T-cell (primary cell): ENCODE measurements at regions of chr10 and their contacts with region 1.

Region 1: DNA sequence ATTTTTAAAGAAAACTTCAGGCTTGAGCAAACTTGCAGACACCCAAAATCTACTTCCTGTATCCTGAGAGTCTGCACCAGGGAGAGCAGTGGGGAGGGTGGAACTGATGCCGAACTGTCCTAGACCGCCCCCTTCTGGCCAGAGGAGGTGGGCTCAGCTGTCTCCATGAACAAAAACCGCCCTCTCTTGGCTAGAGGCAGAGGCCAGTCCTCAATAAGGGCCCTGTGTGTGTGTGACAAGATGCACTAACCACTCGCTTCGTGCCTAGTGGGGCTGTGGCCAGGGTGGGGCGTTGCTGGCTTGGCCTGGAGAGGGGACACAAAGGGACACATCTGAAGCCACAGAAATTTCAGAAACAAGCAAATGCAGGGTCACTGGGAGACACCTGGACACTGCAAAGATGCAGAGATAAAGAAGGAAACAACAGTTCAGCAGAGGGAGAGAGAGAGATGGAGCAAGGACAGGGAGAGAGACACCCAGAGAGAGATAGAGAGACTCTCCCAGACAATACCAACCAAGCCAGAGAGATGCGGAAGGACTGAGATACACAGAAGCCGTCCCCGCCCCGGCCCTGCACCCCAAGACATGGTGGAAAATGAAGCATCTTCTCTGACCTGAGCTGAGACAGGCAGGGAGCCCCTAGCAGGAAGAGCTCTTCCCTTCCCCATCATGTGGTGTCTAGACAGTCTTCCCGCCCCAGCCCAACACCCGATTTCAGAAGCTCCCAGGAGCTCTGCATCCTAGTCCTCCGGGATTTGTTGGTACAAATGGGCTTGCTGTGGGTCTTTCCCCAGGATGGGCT is 22.7 kb upstream of the FXYD4 start:
- DNase-seq: peak; percentile 65 to 94 (median 81)
- ATAC-seq: peak; percentile 99 to 100 (median 100)
- H3K4me3 ChIP-seq: no peak overlapping the region
- H3K4me3 Mint-ChIP-seq: peak overlapping the region in 1 of 3 donors; percentile 45
- H3K27ac ChIP-seq: no peak overlapping the region
- H3K27ac Mint-ChIP-seq: peak overlapping the region; percentile 24 to 65
- H3K4me1 ChIP-seq: peaks cover 2 to 23% of the 10 kb centered on the region in 2 experiments
- H3K4me1 Mint-ChIP-seq: peaks cover 14 to 27% (median 15%) of the 10 kb centered on the region in 3 donors
- H3K27me3 ChIP-seq: peaks cover 0 to 25% of the 10 kb centered on the region in 2 experiments
- H3K27me3 Mint-ChIP-seq: peaks cover 7 to 8% of the 10 kb centered on the region in 2 donors

Region 2: DNA sequence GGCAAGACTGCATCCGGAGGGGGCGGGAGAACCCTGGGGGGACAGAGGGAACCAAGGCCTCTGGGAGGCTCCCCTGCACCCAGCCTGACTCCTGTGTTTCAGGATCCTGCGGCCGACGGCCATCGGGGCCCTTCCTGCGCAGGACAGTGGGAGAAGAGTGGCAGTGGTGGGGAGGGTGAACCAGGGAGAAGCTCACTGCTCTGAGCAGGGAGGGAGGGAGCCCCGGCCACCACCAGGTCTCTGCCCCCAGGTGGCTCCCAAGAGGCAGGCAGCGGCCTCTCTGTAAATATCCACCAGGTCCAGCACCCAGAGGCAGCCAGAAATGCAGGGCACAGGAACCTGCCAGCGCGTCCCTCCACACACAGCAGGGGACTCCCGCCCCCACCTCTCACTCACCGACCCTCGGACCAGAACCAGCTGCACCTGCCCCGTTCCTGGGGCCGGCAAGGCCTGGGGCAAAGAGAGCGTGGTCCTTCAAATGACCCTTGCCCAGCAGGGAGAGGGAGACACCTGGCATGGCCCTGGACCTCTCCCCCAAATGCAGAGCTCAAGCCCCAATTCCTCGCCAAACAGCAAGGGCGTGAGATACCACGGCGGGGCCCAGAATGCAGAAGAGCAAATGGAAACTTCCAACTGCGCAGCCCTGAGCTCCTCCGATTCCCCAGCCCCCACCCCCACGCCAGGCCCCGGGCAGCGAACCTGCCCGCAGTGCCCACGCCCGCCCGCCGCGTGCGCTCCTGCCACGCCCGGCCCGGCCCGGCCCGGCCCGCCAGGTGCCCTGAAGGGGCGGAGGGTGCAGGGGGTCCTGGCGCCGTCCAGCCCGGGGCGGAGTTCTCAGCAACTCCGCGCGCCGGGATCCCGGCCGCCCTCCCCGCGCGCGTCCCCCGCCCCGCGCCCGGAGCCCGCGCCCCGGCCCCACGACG is 82.7 kb before region 1 on chr10:
- CTCF ChIA-PET with region 1: interaction called, 5 to 15 read pairs
- POLR2A ChIA-PET with region 1: no interaction called
- DNase-seq: peak in 25 of 35 experiments; percentile 22 to 58 (median 33)
- ATAC-seq: peak; percentile 70 to 78 (median 74)
- H3K4me3 ChIP-seq: peak overlapping the region; percentile 34 to 49
- H3K4me3 Mint-ChIP-seq: peak overlapping the region; percentile 76 to 81 (median 78)
- H3K27ac ChIP-seq: no peak overlapping the region
- H3K27ac Mint-ChIP-seq: peak overlapping the region; percentile 44 to 69
- H3K4me1 ChIP-seq: peaks cover 0 to 22% of the 10 kb centered on the region in 2 experiments
- H3K4me1 Mint-ChIP-seq: peaks cover 4 to 16% (median 9%) of the 10 kb centered on the region in 3 donors
- H3K27me3 ChIP-seq: peaks cover 6 to 51% of the 10 kb centered on the region in 2 experiments
- H3K27me3 Mint-ChIP-seq: peaks cover 37 to 57% of the 10 kb centered on the region in 2 donors

Region 3: DNA sequence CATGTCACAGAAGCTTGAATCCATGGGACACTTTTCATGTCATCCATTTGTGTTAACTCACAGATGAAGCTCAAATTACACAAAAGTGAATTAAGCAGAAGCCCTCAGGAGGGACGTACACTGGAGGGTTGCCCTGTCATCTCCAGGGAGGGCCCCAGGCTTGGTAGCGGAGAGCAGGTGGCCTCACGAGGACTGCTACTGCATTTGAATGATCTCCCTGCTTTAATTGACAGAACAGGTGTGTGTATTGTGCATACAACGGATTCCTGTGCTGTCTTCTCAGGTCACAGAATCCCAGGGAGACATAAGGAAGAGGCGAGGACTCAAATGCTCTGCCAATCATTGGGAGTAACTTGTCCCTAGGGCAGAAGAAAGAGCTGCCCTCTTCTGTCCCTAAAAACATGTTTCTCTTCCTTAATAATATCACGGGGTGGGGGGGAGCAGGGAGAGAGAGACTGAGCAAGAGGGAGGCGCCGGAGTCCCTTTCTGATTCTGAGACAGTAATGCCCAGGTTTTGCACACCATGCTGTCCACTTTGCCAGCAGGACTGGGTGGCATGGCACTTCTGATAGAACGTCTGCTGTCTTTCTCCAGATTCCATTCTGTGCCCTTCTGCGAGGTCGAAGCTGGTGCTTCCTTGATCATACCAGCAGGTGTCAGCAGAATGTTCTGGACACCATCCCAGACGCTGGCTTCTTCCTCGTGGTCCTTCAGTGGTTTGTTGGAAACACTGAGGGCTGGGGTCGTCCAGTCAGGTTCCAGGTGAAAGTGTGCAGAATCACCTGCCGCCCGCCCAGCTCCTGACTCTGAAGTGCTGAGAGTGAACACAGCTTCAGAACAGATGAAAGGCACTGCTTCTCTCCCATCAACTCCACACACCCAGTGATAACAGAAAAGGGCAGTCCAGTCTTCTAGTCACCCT is 55.7 kb before region 1 on chr10:
- CTCF ChIA-PET with region 1: interaction called, 22 to 24 read pairs
- POLR2A ChIA-PET with region 1: no interaction called
- DNase-seq: peak in 22 of 35 experiments; percentile 10 to 71 (median 26)
- ATAC-seq: peak; percentile 51 to 63 (median 56)
- H3K4me3 ChIP-seq: no peak overlapping the region
- H3K4me3 Mint-ChIP-seq: peak overlapping the region in 2 of 3 donors; percentile 28 to 66
- H3K27ac ChIP-seq: peak overlapping the region; percentile 84
- H3K27ac Mint-ChIP-seq: peak overlapping the region; percentile 81 to 85
- H3K4me1 ChIP-seq: peaks cover 7 to 47% of the 10 kb centered on the region in 2 experiments
- H3K4me1 Mint-ChIP-seq: peaks cover 40 to 75% (median 57%) of the 10 kb centered on the region in 3 donors
- H3K27me3 ChIP-seq: no peaks in the 10 kb centered on the region
- H3K27me3 Mint-ChIP-seq: peaks cover 0 to 7% of the 10 kb centered on the region in 2 donors